ENCODE measurements at regions of chr2 and their contacts with region 1.

Region 1: GRCh38 chr2:105487142-105488069 is 88.6 kb upstream of the FHL2 start:
- DNase-seq: peak; percentile 37 to 57
- ATAC-seq: peak; percentile 40 to 85 (median 58)
- H3K4me3 ChIP-seq: no peak overlapping the region
- H3K27ac ChIP-seq: peak overlapping the region; percentile 76 to 96 (median 87)
- H3K4me1 ChIP-seq: peaks cover 0 to 42% (median 24%) of the 10 kb centered on the region in 9 donors
- H3K27me3 ChIP-seq: no peaks in the 10 kb centered on the region
- CTCF ChIP-seq: no peak

Region 2: DNA sequence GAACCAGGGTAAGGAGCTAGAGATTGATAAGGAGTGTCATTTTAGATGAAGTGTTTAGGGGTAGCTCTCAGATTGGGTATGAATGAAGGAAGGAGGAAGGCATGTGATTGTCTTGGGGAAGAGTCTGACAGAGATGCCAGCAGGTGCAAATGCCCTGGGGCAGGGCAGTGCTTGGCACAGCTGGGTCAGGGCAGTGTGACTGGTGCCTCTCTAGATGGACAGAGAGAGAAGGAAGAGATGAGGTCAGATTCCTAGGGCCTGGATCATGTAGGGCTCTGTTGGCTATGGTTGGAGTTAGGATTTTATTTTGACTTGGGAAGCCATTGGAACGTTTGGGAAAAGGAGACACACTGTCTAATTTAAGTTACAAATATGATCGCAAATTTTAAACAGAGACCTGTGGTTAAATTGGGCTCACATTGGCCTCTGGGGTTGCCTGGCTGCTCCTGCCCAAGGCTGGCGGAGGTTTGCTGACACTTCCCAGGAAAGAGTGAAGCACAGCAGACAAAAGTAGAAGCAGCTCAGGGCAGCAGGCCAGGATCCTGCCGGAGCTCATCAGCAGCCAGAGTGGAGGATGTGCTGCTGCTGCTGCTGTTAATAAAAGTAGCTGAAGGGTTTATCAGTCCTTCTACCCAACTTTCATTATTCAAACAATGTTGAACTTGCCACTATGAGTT is 55.9 kb before region 1 on chr2:
- intact Hi-C with region 1: loop called in 3 of 10 experiments (anchors 2 to 5 kb)
- DNase-seq: peak; percentile 71 to 83
- ATAC-seq: peak; percentile 5 to 76 (median 66)
- H3K4me3 ChIP-seq: peak overlapping the region in 4 of 10 donors; percentile 41 to 62 (median 51)
- H3K27ac ChIP-seq: peak overlapping the region; percentile 54 to 96 (median 90)
- H3K4me1 ChIP-seq: peaks cover 0 to 66% (median 24%) of the 10 kb centered on the region in 9 donors
- H3K27me3 ChIP-seq: no peaks in the 10 kb centered on the region
- CTCF ChIP-seq: no peak

Region 3: DNA sequence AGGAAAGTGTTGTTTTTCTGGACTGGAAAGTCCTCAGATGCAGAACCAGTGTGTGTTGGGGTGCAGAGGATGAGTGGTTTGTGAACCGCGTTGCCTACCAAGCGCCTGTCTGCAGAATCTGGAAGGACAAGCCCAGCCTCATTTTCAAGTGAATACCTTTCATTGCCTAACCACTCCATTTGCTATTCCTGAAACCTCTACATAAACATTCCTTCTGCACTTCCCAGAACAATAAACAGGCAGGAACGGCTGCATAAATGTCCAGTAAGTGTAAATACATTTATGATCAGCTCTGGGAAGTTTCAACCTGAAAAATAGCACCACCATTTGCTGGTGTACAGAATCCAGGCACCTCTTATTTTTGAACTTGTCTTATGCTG is 43.2 kb before region 1 on chr2:
- intact Hi-C with region 1: loop called in 6 of 10 experiments (anchors 2 to 5 kb)
- DNase-seq: no peak
- ATAC-seq: peak in 1 of 8 donors; percentile 5
- H3K4me3 ChIP-seq: no peak overlapping the region
- H3K27ac ChIP-seq: no peak overlapping the region
- H3K4me1 ChIP-seq: peaks cover 0 to 14% (median 2%) of the 10 kb centered on the region in 9 donors
- H3K27me3 ChIP-seq: peaks cover 0 to 3% (median 0%) of the 10 kb centered on the region in 7 donors
- CTCF ChIP-seq: no peak

Measured in heart right ventricle (tissue), 16 donors.